Activated CD4-positive, alpha-beta T cell treated with anti-CD3 and anti-CD28 coated beads, Interleukin-2, amount 10 ng/mL, durations not matched to agents 24 days and 14 days (primary cell): ENCODE measurements at regions of chr5 and their contacts with region 1.

Region 1: DNA sequence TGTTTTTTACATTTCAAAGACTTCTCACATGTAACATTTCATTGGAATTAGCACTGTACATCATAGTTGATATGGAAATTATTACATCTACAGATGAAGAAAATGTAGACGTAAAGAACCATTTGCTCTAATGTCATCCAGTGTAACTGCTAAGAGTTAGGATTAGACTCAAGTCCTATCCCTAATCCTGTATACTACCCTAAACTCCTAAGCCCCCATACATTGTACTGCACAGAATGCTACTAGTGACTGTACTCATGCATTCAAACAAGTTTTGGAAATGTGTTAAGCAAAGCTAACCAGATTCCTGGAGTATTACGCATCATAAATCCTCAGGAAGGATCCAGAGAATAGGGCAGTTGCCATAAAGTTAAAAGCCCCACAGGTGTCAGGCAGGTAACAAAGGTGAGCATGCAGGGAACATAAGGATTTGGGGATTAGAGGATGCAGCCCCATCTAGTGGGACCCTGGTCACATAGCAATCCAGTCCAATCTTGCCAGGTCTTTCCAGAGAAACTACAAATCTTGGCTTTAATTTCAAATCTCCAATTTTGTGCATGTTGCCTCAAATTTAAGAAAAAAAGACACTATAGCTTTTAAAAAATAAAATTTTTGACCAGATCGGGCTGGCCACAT is 32.0 kb downstream of the HAVCR1 start:
- DNase-seq: peak; percentile 71
- H3K4me3 Mint-ChIP-seq: peak overlapping the region; percentile 26
- H3K27ac Mint-ChIP-seq: peak overlapping the region; percentile 91
- H3K4me1 Mint-ChIP-seq: peaks cover 81% of the 10 kb centered on the region
- H3K27me3 Mint-ChIP-seq: peaks cover 2% of the 10 kb centered on the region

Region 2: GRCh38 chr5:156835905-156836304 is 191.0 kb before region 1 on chr5:
- intact Hi-C with region 1: loop called (anchors 5 kb)
- DNase-seq: peak; percentile 57
- H3K4me3 Mint-ChIP-seq: no peak overlapping the region
- H3K27ac Mint-ChIP-seq: no peak overlapping the region
- H3K4me1 Mint-ChIP-seq: peaks cover 20% of the 10 kb centered on the region
- H3K27me3 Mint-ChIP-seq: no peaks in the 10 kb centered on the region

Region 3: DNA sequence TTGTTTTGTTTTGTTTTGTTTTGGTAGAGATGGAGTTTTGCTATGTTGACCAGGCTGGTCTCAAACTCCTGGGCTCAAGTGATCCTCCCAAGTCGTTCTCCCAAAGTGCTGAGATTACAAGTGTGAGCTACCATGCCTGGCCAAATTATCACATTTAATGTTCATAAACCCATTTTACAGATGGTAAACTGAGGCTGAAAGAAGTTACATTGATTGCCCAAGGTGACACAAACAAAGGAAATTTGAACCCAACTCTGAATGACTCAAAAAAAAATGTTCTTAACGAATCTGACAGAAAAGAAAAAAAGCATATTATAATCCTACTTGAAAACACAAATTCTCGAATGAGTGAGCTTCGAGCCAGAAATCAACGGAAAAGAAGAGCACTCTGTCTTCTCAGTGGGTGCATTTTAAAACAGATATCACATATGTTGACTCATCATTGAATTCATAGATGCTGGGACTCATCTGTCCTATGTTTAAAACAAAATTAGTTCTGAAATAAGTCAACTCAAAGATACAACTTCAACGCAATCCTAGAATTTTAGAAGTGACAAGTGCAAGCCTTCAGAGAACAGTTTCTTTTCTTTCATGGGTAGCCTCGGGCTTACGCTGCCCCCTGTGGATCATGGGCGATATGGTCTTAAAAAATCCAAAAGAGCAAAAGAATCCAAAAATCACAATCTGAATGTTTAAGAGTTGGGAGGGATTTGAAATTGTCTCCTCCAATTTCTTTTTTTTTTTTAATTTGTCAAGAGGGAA is 92.3 kb before region 1 on chr5:
- intact Hi-C with region 1: loop called (anchors 1 kb)
- DNase-seq: peak; percentile 90
- H3K4me3 Mint-ChIP-seq: peak overlapping the region; percentile 46
- H3K27ac Mint-ChIP-seq: peak overlapping the region; percentile 93
- H3K4me1 Mint-ChIP-seq: peaks cover 76% of the 10 kb centered on the region
- H3K27me3 Mint-ChIP-seq: no peaks in the 10 kb centered on the region

Region 4: GRCh38 chr5:157038568-157039187 is 11.8 kb after region 1 on chr5:
- intact Hi-C with region 1: no loop called
- DNase-seq: no peak
- H3K4me3 Mint-ChIP-seq: peak overlapping the region; percentile 39
- H3K27ac Mint-ChIP-seq: peak overlapping the region; percentile 85
- H3K4me1 Mint-ChIP-seq: peaks cover 22% of the 10 kb centered on the region
- H3K27me3 Mint-ChIP-seq: no peaks in the 10 kb centered on the region

Region 5: GRCh38 chr5:157100140-157100679 is 73.3 kb after region 1 on chr5:
- intact Hi-C with region 1: loop called (anchors 1 kb)
- DNase-seq: peak; percentile 61
- H3K4me3 Mint-ChIP-seq: peak overlapping the region; percentile 42
- H3K27ac Mint-ChIP-seq: peak overlapping the region; percentile 93
- H3K4me1 Mint-ChIP-seq: peaks cover 41% of the 10 kb centered on the region
- H3K27me3 Mint-ChIP-seq: no peaks in the 10 kb centered on the region

Region 6: DNA sequence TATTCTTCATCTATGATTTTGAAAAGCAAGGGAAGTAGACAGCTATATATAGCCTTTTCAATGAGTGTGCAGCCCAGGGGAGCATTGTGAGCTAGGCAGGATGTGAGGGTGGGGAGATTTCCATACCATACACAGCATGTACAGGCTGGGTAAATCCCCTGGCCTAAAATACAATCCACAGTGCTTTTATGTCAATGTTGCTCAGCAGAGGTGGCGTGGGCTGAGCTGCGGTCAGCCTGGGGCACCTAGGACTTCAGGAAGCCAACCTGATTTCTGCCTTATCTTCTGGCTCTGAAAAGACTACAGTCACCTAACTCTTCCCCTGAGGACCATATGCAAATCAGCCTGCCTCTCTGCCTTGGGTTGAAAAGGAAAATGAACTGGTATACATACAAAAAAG is 145.5 kb after region 1 on chr5:
- intact Hi-C with region 1: loop called (anchors 1 kb)
- DNase-seq: peak; percentile 95
- H3K4me3 Mint-ChIP-seq: peak overlapping the region; percentile 81
- H3K27ac Mint-ChIP-seq: peak overlapping the region; percentile 96
- H3K4me1 Mint-ChIP-seq: peaks cover 76% of the 10 kb centered on the region
- H3K27me3 Mint-ChIP-seq: no peaks in the 10 kb centered on the region

Region 7: GRCh38 chr5:157189223-157189622 is 162.3 kb after region 1 on chr5:
- intact Hi-C with region 1: no loop called
- DNase-seq: peak; percentile 76
- H3K4me3 Mint-ChIP-seq: peak overlapping the region; percentile 83
- H3K27ac Mint-ChIP-seq: peak overlapping the region; percentile 92
- H3K4me1 Mint-ChIP-seq: peaks cover 70% of the 10 kb centered on the region
- H3K27me3 Mint-ChIP-seq: no peaks in the 10 kb centered on the region

Region 8: DNA sequence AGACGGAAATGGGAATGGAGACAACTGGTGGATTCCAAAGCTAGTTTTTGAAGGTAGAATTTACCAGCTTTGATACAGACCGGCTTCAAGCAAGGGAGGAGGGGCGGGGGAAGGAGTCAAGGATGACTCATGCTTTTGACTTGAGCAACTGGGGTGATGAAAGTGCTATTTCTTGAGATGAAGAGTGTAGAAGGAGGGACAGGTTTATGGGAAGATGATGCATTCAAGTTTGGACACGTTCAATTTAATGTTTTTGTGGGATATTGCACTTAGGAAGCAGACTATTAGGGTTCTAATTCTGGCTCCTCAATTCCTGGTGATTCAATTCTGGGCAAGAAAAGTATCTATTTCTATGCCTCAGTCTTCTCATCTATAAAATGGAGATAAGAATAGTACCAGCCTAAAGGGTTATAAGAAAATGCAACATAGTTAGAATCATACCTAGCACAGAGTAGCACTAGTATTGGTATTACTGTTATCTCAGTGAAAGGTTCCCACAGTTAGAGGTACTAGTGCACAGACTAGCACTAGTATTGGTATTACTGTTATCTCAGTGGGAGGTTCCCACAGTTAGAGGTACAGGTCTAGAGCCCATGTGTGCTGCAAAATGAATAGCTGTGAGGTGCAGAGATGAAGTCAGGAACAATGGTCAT is 437.7 kb after region 1 on chr5:
- intact Hi-C with region 1: loop called (anchors 10 kb)
- DNase-seq: peak; percentile 83
- H3K4me3 Mint-ChIP-seq: peak overlapping the region; percentile 0
- H3K27ac Mint-ChIP-seq: peak overlapping the region; percentile 80
- H3K4me1 Mint-ChIP-seq: peaks cover 40% of the 10 kb centered on the region
- H3K27me3 Mint-ChIP-seq: peaks cover 17% of the 10 kb centered on the region